AG04450 (cell line): ENCODE measurements at regions of chr4 and their contacts with region 1.

Region 1: DNA sequence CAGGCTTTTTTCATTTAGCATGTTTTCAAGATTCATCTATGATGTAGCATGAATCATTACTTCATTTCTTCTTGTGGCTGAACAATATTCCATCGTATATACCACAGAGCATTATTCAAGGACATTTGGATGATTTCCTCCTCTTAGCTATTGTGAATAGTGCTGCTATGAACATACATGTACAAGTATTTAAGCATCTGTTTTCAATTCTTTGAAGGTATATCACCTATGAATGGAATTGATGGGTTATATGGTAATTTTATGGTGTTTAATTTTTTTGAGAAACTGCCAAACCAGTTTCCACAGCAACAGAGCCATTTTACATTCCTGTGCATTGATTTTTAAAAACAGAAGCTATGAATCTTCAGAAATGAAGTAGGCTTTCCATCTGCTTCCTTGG is 36.1 kb upstream of the WDR19 start:
- DNase-seq: no peak
- H3K4me3 ChIP-seq: no peak overlapping the region
- H3K27ac ChIP-seq: no peak overlapping the region
- H3K27me3 ChIP-seq: no peaks in the 10 kb centered on the region
- CTCF ChIP-seq: no peak

Region 2: DNA sequence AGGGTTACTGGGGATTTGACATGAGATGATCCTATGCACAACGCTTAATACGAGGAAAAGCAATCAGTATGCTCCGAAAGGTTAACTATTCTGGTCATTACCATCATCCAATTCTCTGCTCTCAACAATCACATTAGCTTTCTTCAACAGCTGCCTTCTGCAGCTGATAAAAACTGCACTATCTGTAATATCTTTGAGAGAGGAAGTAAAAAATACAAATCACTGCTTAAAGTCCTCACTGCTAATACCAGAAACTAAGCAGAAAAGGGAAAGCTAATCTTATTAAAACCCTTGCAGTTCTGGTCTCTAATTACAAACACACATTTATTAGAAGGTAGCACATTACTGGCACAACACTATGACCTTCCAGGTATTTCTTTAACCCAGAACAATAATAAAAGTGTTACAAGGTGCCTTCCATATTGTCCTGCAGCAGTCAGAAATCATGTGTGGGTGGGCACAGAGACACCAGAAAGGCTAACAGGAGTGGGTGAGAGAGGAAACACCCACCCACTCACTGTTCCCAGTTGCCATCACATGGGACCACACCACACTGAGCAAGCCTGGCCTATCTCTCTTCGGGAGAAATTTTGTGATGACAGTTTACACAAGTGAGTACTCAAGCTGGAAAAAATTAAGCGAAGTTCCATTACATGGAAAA is 1531.0 kb before region 1 on chr4:
- CTCF ChIA-PET with region 1: no interaction called
- POLR2A ChIA-PET with region 1: interaction called, 16 read pairs
- DNase-seq: no peak
- H3K4me3 ChIP-seq: no peak overlapping the region
- H3K27ac ChIP-seq: no peak overlapping the region
- H3K27me3 ChIP-seq: no peaks in the 10 kb centered on the region
- CTCF ChIP-seq: no peak

Region 3: GRCh38 chr4:39341075-39341725 is 195.0 kb after region 1 on chr4:
- CTCF ChIA-PET with region 1: no interaction called
- POLR2A ChIA-PET with region 1: no interaction called
- DNase-seq: no peak
- H3K4me3 ChIP-seq: no peak overlapping the region
- H3K27ac ChIP-seq: no peak overlapping the region
- H3K27me3 ChIP-seq: no peaks in the 10 kb centered on the region
- CTCF ChIP-seq: no peak